Ovary (tissue), 10 donors: ENCODE measurements at regions of chr12 and their contacts with region 1.

Region 1: DNA sequence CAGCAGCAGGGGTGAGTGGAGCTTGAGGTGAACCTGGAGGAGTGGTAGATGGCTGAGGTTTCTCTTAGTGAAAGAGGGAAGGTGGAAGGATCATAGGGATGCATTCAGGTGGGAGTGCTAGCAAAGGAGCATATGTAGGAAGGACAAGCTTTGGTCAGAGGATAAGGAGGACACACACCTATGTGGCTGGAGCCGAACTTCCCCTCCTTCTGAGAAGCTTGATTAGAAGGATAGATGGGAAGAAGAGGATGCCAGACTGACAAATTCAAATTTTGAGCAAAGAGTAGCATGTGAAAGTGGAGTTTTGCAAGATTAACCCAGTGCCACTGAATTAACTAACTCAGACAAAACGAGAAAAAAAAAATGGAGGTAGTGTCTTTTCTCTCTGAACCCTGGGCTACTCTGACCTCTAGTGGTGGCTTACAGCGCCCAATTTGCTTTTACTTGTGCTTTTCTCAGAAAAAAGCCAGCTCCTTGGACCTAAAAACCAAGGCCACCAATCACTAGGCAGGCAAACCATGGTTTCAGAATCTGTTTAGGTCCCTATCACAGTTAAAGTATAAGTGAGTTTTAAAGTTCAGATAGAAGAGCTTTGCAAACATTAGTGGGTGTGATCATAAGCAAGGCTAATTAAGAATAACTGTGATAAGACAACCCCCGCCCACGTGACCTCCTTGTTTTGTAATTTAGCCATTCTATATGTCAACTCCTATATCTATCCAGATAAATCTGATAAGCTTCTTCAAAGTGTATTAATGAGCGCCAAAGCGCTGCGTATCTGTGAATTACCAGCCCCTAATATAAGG is 15.5 kb downstream of the EMP1 start:
- DNase-seq: peak; percentile 69 to 84 (median 72)
- H3K4me3 ChIP-seq: no peak overlapping the region
- H3K27ac ChIP-seq: no peak overlapping the region
- H3K4me1 ChIP-seq: peaks cover 6% of the 10 kb centered on the region
- H3K27me3 ChIP-seq: no peaks in the 10 kb centered on the region
- CTCF ChIP-seq: peak; percentile 54 to 78 (median 71)
- EP300 ChIP-seq: no peak
- POLR2A ChIP-seq: no peak

Region 2: DNA sequence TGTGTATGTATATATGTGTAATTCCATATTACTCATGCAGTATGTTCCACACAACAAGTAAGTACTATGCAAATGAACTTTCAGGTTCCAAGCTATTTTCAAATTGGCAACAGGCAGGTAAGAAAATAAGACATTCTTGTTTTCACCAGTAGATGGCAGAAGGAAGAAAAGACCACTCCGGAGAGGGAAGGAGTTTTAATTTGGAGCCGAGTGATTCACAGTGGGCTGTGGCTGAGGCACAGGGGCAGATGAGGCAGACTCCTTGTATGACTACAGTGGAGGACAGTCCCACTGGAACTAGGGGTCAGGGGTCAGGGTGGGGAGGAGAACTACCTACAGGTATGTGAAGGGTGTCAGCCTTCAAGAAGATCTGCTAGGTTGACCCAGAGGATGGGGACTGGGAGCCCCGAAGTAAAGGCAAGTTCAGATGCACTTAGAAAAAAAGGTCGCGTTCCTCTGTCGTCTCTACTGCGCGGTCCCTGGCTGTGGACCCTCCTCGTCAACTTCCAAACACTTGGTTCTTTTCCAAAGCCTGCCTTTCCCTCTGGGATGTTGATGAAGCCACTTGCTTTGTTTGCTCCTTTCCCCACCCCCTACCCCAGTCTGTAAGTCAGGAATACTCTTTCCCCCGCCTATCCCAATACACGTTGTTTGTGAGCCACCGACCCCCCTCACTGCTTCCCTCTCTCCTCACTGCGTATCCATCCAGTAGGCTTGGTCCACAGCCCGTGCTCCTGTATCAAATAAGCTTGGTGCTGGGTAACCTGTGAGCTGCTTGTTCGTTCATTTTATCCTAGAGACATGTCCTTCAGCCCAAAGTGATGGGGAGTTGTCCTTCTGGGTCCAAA is 374.8 kb before region 1 on chr12:
- intact Hi-C with region 1: loop called in 1 of 4 experiments (anchors 10 kb)
- DNase-seq: peak; percentile 47 to 71 (median 62)
- H3K4me3 ChIP-seq: no peak overlapping the region
- H3K27ac ChIP-seq: no peak overlapping the region
- H3K4me1 ChIP-seq: peaks cover 3% of the 10 kb centered on the region
- H3K27me3 ChIP-seq: no peaks in the 10 kb centered on the region
- CTCF ChIP-seq: peak; percentile 32 to 70 (median 61)
- EP300 ChIP-seq: no peak
- POLR2A ChIP-seq: no peak

Region 3: DNA sequence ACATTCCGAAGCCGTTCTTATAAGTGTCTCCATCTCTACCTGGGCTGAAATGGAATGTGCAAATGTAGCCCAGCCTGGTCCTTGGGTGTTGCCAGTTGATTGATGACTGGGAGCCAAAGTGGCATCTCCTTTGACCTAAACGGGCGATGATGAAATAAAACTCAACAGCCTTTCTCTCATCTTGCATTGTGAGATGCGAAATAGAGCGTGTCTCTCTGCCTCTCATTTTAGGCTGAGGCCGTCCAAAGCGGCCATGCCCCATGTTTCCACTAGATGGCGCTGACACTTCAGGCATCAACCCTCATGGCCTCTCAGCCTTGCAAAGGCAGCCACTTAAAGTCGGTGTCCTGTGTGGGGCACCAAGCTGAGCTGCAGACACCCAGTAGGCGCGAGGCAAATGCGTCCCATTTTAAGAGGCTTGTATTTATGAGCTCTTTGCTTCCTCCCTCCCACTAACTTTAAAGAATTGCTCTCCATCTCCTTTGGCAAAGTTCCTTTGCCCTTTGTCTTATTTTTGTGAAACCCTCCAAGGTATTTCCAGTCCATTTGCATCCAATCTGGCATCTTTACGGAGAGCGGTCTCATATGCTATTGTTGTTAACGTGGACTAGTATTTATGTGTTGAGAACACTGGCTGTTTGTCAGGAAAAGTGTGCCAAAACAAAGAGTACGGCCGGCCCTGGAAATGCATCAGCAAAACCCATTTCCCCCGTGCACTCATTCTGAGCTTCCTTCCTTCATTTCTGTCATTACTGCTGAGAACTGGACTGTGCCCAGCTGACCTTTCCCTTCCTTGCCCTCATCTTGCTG is 295.7 kb before region 1 on chr12:
- intact Hi-C with region 1: loop called in 3 of 4 experiments (anchors 5 to 10 kb)
- DNase-seq: peak; percentile 81 to 92 (median 90)
- H3K4me3 ChIP-seq: no peak overlapping the region
- H3K27ac ChIP-seq: peak overlapping the region; percentile 45 to 49
- H3K4me1 ChIP-seq: peaks cover 13% of the 10 kb centered on the region
- H3K27me3 ChIP-seq: no peaks in the 10 kb centered on the region
- CTCF ChIP-seq: peak; percentile 92 to 98 (median 94)
- EP300 ChIP-seq: no peak
- POLR2A ChIP-seq: no peak

Region 4: GRCh38 chr12:12999959-13000615 is 212.0 kb before region 1 on chr12 and contains the start of gene HEBP1:
- intact Hi-C with region 1: loop called in 1 of 4 experiments (anchors 10 kb)
- DNase-seq: peak; percentile 96 to 99 (median 98)
- H3K4me3 ChIP-seq: peak within 1 kb of the TSS; percentile 62
- H3K27ac ChIP-seq: peak within 1 kb of the TSS; percentile 89 to 95
- H3K4me1 ChIP-seq: peaks cover 9% of the 10 kb centered on the region
- H3K27me3 ChIP-seq: no peaks in the 10 kb centered on the region
- CTCF ChIP-seq: peak in 1 of 3 donors; percentile 13
- EP300 ChIP-seq: no peak
- POLR2A ChIP-seq: peak; percentile 92
- total RNA-seq, gene HEBP1: 31.6 to 102 (median 83.7) TPM

Region 5: GRCh38 chr12:13023811-13024530 is 188.1 kb before region 1 on chr12:
- intact Hi-C with region 1: loop called in 1 of 4 experiments (anchors 10 kb)
- DNase-seq: peak in 1 of 5 donors; percentile 37
- H3K4me3 ChIP-seq: no peak overlapping the region
- H3K27ac ChIP-seq: no peak overlapping the region
- H3K4me1 ChIP-seq: no peaks in the 10 kb centered on the region
- H3K27me3 ChIP-seq: no peaks in the 10 kb centered on the region
- CTCF ChIP-seq: no peak
- EP300 ChIP-seq: no peak
- POLR2A ChIP-seq: no peak

Region 6: DNA sequence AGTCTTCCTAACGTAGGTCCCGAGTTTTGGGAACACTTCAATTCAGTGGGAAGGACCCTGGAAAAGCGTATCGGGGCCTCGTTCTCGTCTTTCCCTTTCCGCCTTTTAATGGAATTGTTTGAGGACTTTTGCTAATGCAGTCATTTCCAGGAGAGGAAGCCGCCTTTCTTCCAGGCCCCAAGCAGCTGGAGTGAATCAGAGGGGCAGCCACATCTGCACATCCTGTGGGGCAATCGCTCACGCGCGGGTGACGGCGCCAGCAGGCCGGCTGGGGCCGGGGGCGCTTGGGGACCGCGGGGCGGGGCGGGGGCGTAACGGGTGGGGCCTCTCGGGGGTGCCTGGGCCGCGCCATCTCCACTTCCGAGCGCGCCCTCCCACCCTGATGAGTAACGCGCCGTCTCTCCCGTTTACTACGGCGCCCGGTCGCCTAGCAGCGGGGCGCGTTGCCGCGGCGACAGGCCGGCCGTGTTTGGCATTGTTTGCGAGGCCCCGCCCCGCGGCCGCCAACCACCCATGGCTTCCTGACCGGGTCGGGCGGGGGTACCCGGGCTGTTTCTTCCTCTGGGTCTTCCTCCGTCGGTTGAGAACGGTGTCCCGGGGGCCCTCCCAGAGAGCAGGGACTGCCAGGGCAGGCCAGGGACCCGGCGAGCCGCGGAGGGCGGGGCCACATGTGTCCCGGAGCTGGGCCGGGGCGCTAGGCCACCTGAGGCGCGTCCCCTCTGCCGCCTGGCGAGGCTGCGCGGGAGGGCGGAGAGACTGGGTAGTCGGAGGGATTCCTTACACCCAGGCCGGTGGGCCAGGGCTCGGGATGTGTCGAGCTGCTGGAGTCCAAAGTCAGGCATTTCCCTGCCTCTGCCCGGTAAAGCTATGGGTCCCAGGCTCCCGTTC is 110.9 kb before region 1 on chr12:
- intact Hi-C with region 1: loop called (anchors 5 kb)
- DNase-seq: peak; percentile 79 to 93 (median 89)
- H3K4me3 ChIP-seq: peak overlapping the region; percentile 45
- H3K27ac ChIP-seq: peak overlapping the region; percentile 69 to 94
- H3K4me1 ChIP-seq: peaks cover 4% of the 10 kb centered on the region
- H3K27me3 ChIP-seq: no peaks in the 10 kb centered on the region
- CTCF ChIP-seq: peak in 2 of 3 donors; percentile 16 to 20
- EP300 ChIP-seq: peak; percentile 70
- POLR2A ChIP-seq: peak; percentile 27

Region 7: GRCh38 chr12:13124661-13125505 is 87.2 kb before region 1 on chr12:
- intact Hi-C with region 1: no loop called
- DNase-seq: no peak
- H3K4me3 ChIP-seq: no peak overlapping the region
- H3K27ac ChIP-seq: no peak overlapping the region
- H3K4me1 ChIP-seq: no peaks in the 10 kb centered on the region
- H3K27me3 ChIP-seq: no peaks in the 10 kb centered on the region
- CTCF ChIP-seq: no peak
- EP300 ChIP-seq: no peak
- POLR2A ChIP-seq: no peak

Region 8: DNA sequence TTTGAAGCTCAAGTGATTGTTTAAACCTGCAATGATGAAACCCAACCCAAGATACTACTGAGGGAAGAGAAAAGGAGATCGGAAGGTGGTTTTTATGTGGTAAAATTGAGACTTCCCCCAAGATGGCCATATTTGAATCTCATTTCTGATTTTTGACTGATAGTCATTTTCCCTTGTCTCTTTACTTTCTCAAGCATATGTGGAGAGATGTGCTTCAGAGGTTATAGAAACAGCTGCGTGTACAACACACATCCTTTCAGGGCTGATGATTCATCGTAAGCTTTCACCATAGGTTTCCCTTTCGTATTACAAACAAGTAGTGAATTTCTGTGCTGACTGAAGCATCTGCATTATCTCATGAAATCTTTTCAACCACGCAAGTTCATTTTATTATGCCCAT is 260.6 kb after region 1 on chr12:
- intact Hi-C with region 1: no loop called
- DNase-seq: no peak
- H3K4me3 ChIP-seq: no peak overlapping the region
- H3K27ac ChIP-seq: no peak overlapping the region
- H3K4me1 ChIP-seq: no peaks in the 10 kb centered on the region
- H3K27me3 ChIP-seq: no peaks in the 10 kb centered on the region
- CTCF ChIP-seq: no peak
- EP300 ChIP-seq: no peak
- POLR2A ChIP-seq: no peak